Activated CD4-positive, alpha-beta T cell treated with anti-CD3 and anti-CD28 coated beads, Interleukin-2, amount 10 ng/mL, durations not matched to agents 24 days and 14 days (primary cell): ENCODE measurements at regions of chr19 and their contacts with region 1.

Region 1: GRCh38 chr19:28456252-28456651 is 756.7 kb downstream of the UQCRFS1 start:
- DNase-seq: no peak
- H3K4me3 Mint-ChIP-seq: no peak overlapping the region
- H3K27ac Mint-ChIP-seq: peak overlapping the region; percentile 61
- H3K4me1 Mint-ChIP-seq: peaks cover 36% of the 10 kb centered on the region
- H3K27me3 Mint-ChIP-seq: no peaks in the 10 kb centered on the region

Region 2: GRCh38 chr19:28393574-28394336 is 62.5 kb before region 1 on chr19:
- intact Hi-C with region 1: loop called (anchors 2 kb)
- DNase-seq: peak; percentile 80
- H3K4me3 Mint-ChIP-seq: peak overlapping the region; percentile 78
- H3K27ac Mint-ChIP-seq: peak overlapping the region; percentile 89
- H3K4me1 Mint-ChIP-seq: peaks cover 42% of the 10 kb centered on the region
- H3K27me3 Mint-ChIP-seq: no peaks in the 10 kb centered on the region

Region 3: DNA sequence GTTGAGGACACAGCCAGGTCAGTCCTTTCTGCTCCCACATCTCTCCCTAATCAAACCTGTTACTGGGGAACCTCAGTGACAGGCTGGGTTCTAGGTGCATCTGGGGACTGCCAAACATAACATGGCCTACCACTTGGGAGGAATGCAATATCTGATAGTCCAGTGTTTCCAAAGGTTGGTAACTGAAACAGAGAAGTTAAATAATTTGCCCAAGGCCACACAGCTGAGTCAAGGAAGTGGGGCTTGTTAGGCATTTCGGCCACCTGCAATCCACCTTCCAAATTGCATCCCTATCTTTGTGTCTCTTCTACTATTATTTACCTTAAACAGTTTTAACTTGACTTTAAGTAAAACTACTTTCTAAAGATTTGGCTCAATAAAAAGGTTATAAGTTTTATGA is 25.4 kb after region 1 on chr19:
- intact Hi-C with region 1: loop called (anchors 2 kb)
- DNase-seq: no peak
- H3K4me3 Mint-ChIP-seq: no peak overlapping the region
- H3K27ac Mint-ChIP-seq: no peak overlapping the region
- H3K4me1 Mint-ChIP-seq: peaks cover 8% of the 10 kb centered on the region
- H3K27me3 Mint-ChIP-seq: no peaks in the 10 kb centered on the region